GM10248 (cell line): ENCODE measurements at regions of chr13 and their contacts with region 1.

Region 1: GRCh38 chr13:50708461-50708860 is 135.0 kb downstream of the DLEU7 start:
- DNase-seq: no peak
- CTCF ChIP-seq: no peak

Region 2: GRCh38 chr13:50693727-50694126 is 14.7 kb before region 1 on chr13:
- CTCF ChIA-PET with region 1: interaction called, 14 read pairs
- POLR2A ChIA-PET with region 1: no interaction called
- DNase-seq: no peak
- CTCF ChIP-seq: no peak

Region 3: GRCh38 chr13:50720861-50721671 is 12.6 kb after region 1 on chr13:
- CTCF ChIA-PET with region 1: no interaction called
- POLR2A ChIA-PET with region 1: no interaction called
- DNase-seq: no peak
- CTCF ChIP-seq: no peak